MCF 10A (cell line): ENCODE measurements at regions of chr4 and their contacts with region 1.

Region 1: DNA sequence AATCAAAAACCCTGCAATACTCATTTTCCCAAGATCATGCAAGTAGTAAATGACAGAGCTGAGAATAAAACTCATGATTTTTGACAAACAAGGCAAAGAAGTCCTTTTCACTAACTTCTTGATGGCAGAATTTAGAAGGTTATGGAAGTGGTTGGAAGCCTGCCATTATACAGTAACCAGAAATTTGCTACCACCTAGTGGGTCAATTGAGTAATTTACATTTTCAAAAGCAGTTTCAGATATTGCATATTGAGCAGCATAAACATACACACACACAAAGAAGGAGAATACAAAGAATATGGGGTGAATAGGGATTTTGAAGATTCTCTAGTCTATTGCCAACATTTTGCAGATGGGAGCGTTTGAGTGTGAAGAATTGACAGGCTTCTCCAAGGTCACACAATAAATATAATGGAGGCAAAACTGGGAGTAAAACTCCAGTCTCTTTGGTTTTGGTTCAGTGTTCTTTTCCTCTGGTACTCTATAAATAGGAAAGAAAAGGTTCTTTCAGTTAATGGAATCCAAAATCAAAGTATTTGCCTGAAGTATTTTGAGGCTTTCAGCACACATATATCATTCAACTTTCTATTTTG is 70.2 kb downstream of the GC start:
- DNase-seq: peak; percentile 62
- H3K4me3 Mint-ChIP-seq: no peak overlapping the region
- H3K27ac Mint-ChIP-seq: no peak overlapping the region
- H3K4me1 Mint-ChIP-seq: no peaks in the 10 kb centered on the region
- H3K27me3 Mint-ChIP-seq: peaks cover 20% of the 10 kb centered on the region
- CTCF ChIP-seq: peak; percentile 47

Region 2: DNA sequence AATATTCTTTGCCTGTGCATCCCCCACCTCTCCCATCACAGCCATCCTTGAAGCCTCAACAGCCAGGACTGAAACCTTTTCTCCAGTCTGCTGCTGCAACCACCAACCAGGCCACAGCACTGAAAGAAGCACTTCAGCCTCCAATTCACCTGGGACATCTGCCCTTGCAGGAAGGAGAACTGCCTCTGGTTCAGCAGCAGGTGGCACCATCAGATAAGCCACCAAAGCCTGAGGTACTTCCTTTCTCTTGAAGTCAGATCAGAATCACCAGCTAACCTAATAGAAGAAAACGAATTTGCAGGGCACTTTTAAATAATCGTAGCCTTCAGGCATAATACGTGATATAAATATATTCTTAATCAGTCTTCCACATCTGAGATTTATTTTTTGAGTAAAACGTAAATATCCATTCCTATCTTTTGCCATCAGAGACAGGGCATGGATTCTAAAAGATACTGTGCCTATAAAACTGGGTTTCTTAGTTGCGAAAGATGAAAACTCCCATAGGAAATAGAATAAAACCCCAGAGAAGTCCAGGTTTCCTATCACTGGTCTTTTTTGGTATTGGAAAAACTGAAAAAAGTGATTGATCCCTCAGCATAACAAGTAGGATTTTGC is 1112.2 kb before region 1 on chr4:
- CTCF ChIA-PET with region 1: interaction called, 3 read pairs
- POLR2A ChIA-PET with region 1: no interaction called
- intact Hi-C with region 1: loop called (anchors 1 kb)
- DNase-seq: peak; percentile 76
- H3K4me3 Mint-ChIP-seq: no peak overlapping the region
- H3K27ac Mint-ChIP-seq: no peak overlapping the region
- H3K4me1 Mint-ChIP-seq: no peaks in the 10 kb centered on the region
- H3K27me3 Mint-ChIP-seq: no peaks in the 10 kb centered on the region
- CTCF ChIP-seq: peak; percentile 72

Region 3: DNA sequence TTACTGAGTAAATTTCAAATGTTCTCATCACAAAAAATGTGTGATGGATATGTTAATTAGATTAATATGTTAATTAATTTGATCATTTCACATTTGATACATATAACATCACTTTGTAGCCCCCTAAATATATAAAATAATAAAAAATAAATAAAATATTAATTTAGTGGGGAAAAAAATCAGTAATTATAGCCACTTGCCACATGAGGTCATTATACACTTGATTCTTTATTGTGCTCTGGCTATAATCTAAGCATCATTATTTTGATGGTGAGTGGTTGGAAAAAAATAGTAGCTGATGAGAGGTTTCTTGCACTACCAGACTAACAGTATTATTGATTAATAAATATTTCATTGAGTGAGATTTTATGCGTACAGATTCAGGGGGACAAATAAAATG is 662.9 kb before region 1 on chr4:
- CTCF ChIA-PET with region 1: interaction called, 3 read pairs
- POLR2A ChIA-PET with region 1: no interaction called
- intact Hi-C with region 1: loop called (anchors 2 kb)
- DNase-seq: no peak
- H3K4me3 Mint-ChIP-seq: no peak overlapping the region
- H3K27ac Mint-ChIP-seq: no peak overlapping the region
- H3K4me1 Mint-ChIP-seq: no peaks in the 10 kb centered on the region
- H3K27me3 Mint-ChIP-seq: no peaks in the 10 kb centered on the region
- CTCF ChIP-seq: no peak

Region 4: GRCh38 chr4:71184195-71184781 is 529.4 kb before region 1 on chr4:
- CTCF ChIA-PET with region 1: interaction called, 35 read pairs
- POLR2A ChIA-PET with region 1: no interaction called
- intact Hi-C with region 1: loop called (anchors 1 kb)
- DNase-seq: peak; percentile 68
- H3K4me3 Mint-ChIP-seq: no peak overlapping the region
- H3K27ac Mint-ChIP-seq: no peak overlapping the region
- H3K4me1 Mint-ChIP-seq: no peaks in the 10 kb centered on the region
- H3K27me3 Mint-ChIP-seq: peaks cover 25% of the 10 kb centered on the region
- CTCF ChIP-seq: peak; percentile 56

Region 5: GRCh38 chr4:71270901-71271300 is 442.8 kb before region 1 on chr4:
- CTCF ChIA-PET with region 1: interaction called, 6 read pairs
- POLR2A ChIA-PET with region 1: no interaction called
- intact Hi-C with region 1: loop called (anchors 1 kb)
- DNase-seq: peak; percentile 67
- H3K4me3 Mint-ChIP-seq: no peak overlapping the region
- H3K27ac Mint-ChIP-seq: no peak overlapping the region
- H3K4me1 Mint-ChIP-seq: no peaks in the 10 kb centered on the region
- H3K27me3 Mint-ChIP-seq: no peaks in the 10 kb centered on the region
- CTCF ChIP-seq: peak; percentile 17

Region 6: GRCh38 chr4:71553605-71554004 is 160.1 kb before region 1 on chr4:
- CTCF ChIA-PET with region 1: interaction called, 13 read pairs
- POLR2A ChIA-PET with region 1: no interaction called
- intact Hi-C with region 1: loop called (anchors 10 kb)
- DNase-seq: peak; percentile 41
- H3K4me3 Mint-ChIP-seq: no peak overlapping the region
- H3K27ac Mint-ChIP-seq: no peak overlapping the region
- H3K4me1 Mint-ChIP-seq: no peaks in the 10 kb centered on the region
- H3K27me3 Mint-ChIP-seq: no peaks in the 10 kb centered on the region
- CTCF ChIP-seq: peak; percentile 51

Region 7: DNA sequence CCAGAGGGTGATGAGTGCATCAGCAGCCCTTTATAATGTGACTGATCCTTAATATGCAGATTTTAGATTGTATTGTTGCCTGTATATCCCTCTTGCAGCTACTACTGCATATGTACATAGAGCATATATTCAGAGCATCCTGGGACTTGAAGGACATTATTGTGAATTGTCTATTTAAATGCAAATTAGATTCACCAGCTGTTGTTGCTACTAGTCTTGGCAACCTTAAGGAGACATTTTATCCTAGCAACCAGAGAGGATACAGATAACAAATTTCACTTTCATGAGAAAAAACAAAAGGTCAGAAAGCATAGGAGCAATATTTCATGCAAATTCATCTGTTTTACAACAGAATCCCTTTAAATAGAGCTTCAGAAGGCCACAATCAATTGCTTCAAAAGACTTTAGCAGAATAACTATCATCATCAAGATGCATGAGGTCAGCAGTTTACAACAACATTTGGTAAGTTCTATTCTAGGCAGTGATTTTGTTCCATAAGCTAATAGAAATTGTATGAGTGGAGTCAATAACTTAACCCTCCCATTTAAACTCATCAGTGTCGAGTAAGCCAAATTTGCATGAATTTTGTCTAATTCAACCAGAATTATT is 78.5 kb before region 1 on chr4:
- CTCF ChIA-PET with region 1: no interaction called
- POLR2A ChIA-PET with region 1: no interaction called
- intact Hi-C with region 1: no loop called
- DNase-seq: no peak
- H3K4me3 Mint-ChIP-seq: no peak overlapping the region
- H3K27ac Mint-ChIP-seq: no peak overlapping the region
- H3K4me1 Mint-ChIP-seq: peaks cover 5% of the 10 kb centered on the region
- H3K27me3 Mint-ChIP-seq: no peaks in the 10 kb centered on the region
- CTCF ChIP-seq: no peak